PC-3 (cell line): ENCODE measurements at regions of chr12 and their contacts with region 1.

Region 1: DNA sequence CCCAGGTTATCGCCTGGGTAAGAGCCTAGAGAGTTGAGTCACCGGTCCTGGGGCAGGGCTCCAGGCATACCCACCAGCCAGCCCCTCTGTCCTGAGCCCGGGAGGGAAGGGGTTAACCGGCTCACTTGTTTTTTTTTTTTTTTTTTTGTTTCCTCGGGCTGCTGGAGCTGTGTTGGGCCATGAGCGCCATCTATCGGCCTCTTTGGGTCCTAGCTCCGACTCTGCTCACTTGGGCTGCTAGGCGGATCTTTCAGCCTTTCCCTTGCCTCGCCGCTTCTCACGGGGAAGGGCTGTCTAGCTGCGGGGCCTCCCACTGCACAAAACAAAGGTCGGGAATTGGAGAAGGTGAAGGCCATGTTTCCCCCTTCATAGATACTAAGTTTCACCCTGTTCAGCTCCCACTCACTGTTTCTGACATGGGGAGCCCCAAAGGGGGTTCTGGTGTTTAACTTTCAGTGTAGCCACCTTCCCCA is 2.8 kb upstream of the SMUG1 start:
- DNase-seq: peak; percentile 84
- ATAC-seq: peak; percentile 61
- H3K4me3 ChIP-seq: peak overlapping the region; percentile 26; the same call in 1 of the 2 replicates
- H3K27ac ChIP-seq: no peak overlapping the region
- H3K4me1 ChIP-seq: peaks cover 24% of the 10 kb centered on the region
- H3K27me3 ChIP-seq: no peaks in the 10 kb centered on the region
- CTCF ChIP-seq: peak; percentile 85

Region 2: GRCh38 chr12:53943861-53944608 is 247.6 kb before region 1 on chr12:
- CTCF ChIA-PET with region 1: interaction called, 10 read pairs
- POLR2A ChIA-PET with region 1: no interaction called
- intact Hi-C with region 1: no loop called
- DNase-seq: no peak
- ATAC-seq: no peak
- H3K4me3 ChIP-seq: no peak overlapping the region
- H3K27ac ChIP-seq: no peak overlapping the region
- H3K4me1 ChIP-seq: peaks cover 33% of the 10 kb centered on the region
- H3K27me3 ChIP-seq: no peaks in the 10 kb centered on the region
- CTCF ChIP-seq: no peak

Region 3: GRCh38 chr12:54134850-54135249 is 56.7 kb before region 1 on chr12:
- CTCF ChIA-PET with region 1: no interaction called
- POLR2A ChIA-PET with region 1: no interaction called
- intact Hi-C with region 1: no loop called
- DNase-seq: peak; percentile 17
- ATAC-seq: no peak; the same call in 1 of the 2 replicates
- H3K4me3 ChIP-seq: no peak overlapping the region
- H3K27ac ChIP-seq: no peak overlapping the region
- H3K4me1 ChIP-seq: no peaks in the 10 kb centered on the region
- H3K27me3 ChIP-seq: no peaks in the 10 kb centered on the region
- CTCF ChIP-seq: no peak; the same call in 1 of the 2 replicates

Region 4: DNA sequence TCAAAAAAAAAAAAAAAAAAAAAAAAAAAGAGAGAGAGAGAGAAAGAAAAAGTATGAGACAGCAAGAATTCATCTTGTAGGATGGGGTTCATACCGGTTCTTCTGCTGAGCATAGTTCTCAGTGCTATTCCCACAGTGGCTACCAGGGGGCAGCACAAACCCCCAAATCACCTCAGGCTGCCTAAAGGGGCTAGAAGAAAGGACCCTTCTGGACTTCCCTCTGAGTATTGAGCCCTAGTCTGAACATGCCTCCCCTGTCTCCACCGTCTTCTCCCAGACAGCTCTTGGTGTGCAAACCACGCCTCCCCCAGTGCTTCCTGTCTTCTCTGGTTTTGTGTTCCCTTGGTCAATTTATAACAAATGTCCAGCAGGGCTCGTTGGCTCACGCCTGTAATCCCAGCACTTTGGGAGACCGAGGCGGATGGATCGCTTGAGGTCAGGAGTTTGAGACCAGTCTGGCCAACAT is 28.5 kb after region 1 on chr12:
- CTCF ChIA-PET with region 1: interaction called, 12 read pairs
- POLR2A ChIA-PET with region 1: no interaction called
- intact Hi-C with region 1: no loop called
- DNase-seq: peak; percentile 75
- ATAC-seq: peak; percentile 52
- H3K4me3 ChIP-seq: peak overlapping the region; percentile 62; the same call in 1 of the 2 replicates
- H3K27ac ChIP-seq: no peak overlapping the region
- H3K4me1 ChIP-seq: peaks cover 16% of the 10 kb centered on the region
- H3K27me3 ChIP-seq: no peaks in the 10 kb centered on the region
- CTCF ChIP-seq: peak; percentile 79